Sigmoid colon (tissue), 7 donors: ENCODE measurements at regions of chr1 and their contacts with region 1.

Region 1: DNA sequence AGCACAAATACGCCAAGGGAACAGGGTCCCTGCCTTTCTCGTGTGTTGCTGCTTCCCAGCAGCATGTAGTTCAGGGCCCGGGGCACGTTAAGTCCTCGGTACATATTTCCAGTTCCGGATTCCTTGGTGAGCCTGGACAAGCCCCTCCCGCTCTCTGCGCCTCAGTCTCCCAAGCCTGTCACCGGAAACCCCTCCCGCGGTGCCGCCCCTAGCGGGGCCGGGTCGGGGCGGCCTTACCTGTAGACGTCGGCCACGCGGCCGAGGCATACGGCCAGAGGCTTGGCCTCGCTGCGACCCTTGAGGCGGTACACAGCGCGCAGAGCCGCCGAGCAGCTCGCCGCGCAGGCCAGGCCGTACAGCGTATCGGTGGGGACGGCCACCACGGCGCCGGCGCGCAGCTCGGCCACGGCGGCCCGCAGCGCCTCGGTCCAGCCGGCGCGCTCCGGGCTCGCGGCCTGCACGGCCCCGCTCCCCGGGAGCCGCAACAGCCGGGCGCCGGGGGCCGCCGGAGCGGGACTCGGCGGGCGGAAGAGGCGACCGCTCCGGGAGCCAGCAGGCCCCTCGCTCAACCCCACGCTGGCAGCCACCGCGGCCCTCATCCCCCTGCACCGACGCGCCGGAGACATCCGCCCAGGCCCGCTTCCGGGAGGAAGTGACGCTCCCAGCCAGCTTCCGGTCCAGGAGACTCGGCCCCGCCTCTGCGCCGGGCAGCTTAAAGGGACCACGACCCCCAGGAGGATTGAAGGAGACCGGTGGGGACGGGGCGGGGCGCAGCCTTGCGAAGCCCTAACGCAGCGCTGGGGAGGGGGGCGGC is at the starts of genes C1orf122 and YRDC:
- DNase-seq: peak; percentile 97
- H3K4me3 ChIP-seq: peak within 1 kb of the TSS; percentile 77 to 90 (median 86)
- H3K27ac ChIP-seq: peak within 1 kb of the TSS; percentile 91 to 98 (median 97)
- H3K4me1 ChIP-seq: peaks cover 0 to 34% (median 25%) of the 10 kb centered on the region in 4 donors
- H3K27me3 ChIP-seq: no peaks in the 10 kb centered on the region
- CTCF ChIP-seq: no peak
- EP300 ChIP-seq: no peak
- POLR2A ChIP-seq: peak; percentile 60 to 73
- total RNA-seq, gene C1orf122: 61.9 to 105 (median 90.8) TPM
- total RNA-seq, gene YRDC: 4.4 to 12.4 (median 9.5) TPM

Region 2: GRCh38 chr1:37859507-37860345 is 52.0 kb after region 1 on chr1 and contains the start of gene MTF1:
- intact Hi-C with region 1: loop called (anchors 2 kb)
- DNase-seq: peak; percentile 99
- H3K4me3 ChIP-seq: peak within 1 kb of the TSS; percentile 76 to 96 (median 86)
- H3K27ac ChIP-seq: peak within 1 kb of the TSS; percentile 92 to 97 (median 96)
- H3K4me1 ChIP-seq: peaks cover 0 to 46% (median 42%) of the 10 kb centered on the region in 4 donors
- H3K27me3 ChIP-seq: no peaks in the 10 kb centered on the region
- CTCF ChIP-seq: peak; percentile 74 to 92 (median 86)
- EP300 ChIP-seq: no peak
- POLR2A ChIP-seq: peak; percentile 49 to 81
- total RNA-seq, gene MTF1: 3.9 to 6.6 (median 4.4) TPM

Region 3: DNA sequence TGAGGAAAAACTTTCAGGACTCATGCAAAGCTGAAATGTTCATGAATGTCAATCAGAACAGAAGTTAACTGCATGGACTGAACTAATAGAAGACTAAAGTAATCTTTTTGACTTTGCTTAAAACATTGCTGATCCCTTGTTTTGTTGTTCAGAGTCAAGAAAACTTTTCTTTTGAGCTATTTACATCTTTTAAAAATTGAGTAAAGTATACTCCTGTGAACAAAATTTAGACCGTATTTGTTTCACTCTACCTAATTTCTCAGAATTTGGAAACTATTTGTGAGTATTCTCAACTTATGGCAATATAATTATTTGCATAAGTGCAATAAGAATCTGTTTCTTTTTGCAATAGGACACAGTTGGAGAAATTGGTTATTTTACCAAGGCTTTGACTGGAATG is 98.0 kb after region 1 on chr1:
- intact Hi-C with region 1: no loop called
- DNase-seq: no peak
- H3K4me3 ChIP-seq: no peak overlapping the region
- H3K27ac ChIP-seq: no peak overlapping the region
- H3K4me1 ChIP-seq: no peaks in the 10 kb centered on the region
- H3K27me3 ChIP-seq: no peaks in the 10 kb centered on the region
- CTCF ChIP-seq: no peak
- EP300 ChIP-seq: no peak
- POLR2A ChIP-seq: no peak

Region 4: GRCh38 chr1:37946703-37947360 is 139.1 kb after region 1 on chr1 and contains the start of gene INPP5B:
- intact Hi-C with region 1: loop called (anchors 10 kb)
- DNase-seq: peak; percentile 95
- H3K4me3 ChIP-seq: peak within 1 kb of the TSS; percentile 71 to 87 (median 78)
- H3K27ac ChIP-seq: peak within 1 kb of the TSS; percentile 87 to 94 (median 90)
- H3K4me1 ChIP-seq: peaks cover 0 to 27% (median 21%) of the 10 kb centered on the region in 4 donors
- H3K27me3 ChIP-seq: no peaks in the 10 kb centered on the region
- CTCF ChIP-seq: peak in 1 of 4 experiments; percentile 21
- EP300 ChIP-seq: no peak
- POLR2A ChIP-seq: peak; percentile 41 to 54
- total RNA-seq, gene INPP5B: 29.0 to 34.1 (median 31.7) TPM

Region 5: GRCh38 chr1:38046884-38047602 is 239.3 kb after region 1 on chr1:
- intact Hi-C with region 1: loop called (anchors 10 kb)
- DNase-seq: peak; percentile 91
- H3K4me3 ChIP-seq: peak overlapping the region; percentile 35 to 61 (median 52)
- H3K27ac ChIP-seq: peak overlapping the region; percentile 51 to 70 (median 67)
- H3K4me1 ChIP-seq: peaks cover 0 to 35% (median 32%) of the 10 kb centered on the region in 4 donors
- H3K27me3 ChIP-seq: peaks cover 36 to 54% (median 48%) of the 10 kb centered on the region in 3 donors
- CTCF ChIP-seq: no peak
- EP300 ChIP-seq: no peak
- POLR2A ChIP-seq: no peak

Region 6: DNA sequence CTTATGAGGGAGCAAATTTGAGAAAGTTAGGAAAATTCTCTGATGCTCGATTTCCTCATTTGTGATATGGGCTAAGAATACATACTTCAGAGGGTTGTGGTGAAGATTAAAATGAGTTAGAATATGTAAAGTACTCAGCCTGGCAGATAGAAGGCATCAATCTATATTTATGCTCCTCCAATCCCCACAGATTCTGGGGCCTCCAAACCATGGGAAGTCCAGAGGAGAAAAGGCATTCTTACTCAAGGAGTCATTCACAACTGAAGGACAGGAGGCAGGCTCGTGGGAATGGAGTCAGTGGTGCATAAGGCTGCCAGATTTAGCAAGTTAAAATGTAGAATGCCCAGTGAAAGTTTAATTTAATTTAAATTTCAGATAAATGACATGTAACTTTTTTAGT is 568.8 kb after region 1 on chr1:
- intact Hi-C with region 1: no loop called
- DNase-seq: no peak
- H3K4me3 ChIP-seq: no peak overlapping the region
- H3K27ac ChIP-seq: no peak overlapping the region
- H3K4me1 ChIP-seq: no peaks in the 10 kb centered on the region
- H3K27me3 ChIP-seq: peaks cover 0 to 7% (median 0%) of the 10 kb centered on the region in 3 donors
- CTCF ChIP-seq: no peak
- EP300 ChIP-seq: no peak
- POLR2A ChIP-seq: no peak